ENCODE measurements at regions of chr4 and their contacts with region 1.

Region 1: DNA sequence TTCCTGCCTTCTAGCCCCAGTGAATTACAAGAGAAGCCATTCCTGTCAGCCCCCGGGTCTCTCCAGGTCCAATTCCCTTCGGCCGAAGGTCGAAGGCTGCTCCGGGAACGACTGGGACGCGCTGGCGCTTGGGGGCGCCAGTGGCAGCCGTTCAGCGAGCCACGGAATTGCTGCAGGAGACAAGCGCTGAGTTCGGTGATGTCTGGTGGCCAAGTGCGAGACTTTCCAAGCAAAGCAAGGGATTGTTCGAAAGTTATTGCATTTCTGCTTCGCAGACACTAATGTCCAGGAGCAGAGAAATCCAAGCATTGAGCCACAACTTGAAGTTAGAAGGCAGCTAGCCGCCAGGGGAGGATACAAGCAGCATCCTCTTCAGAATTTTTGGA is 1.1 kb upstream of the DKK2 start:
- DNase-seq: peak in 3 of 5 donors; percentile 27 to 59 (median 29)
- ATAC-seq: peak in 3 of 4 donors; percentile 41 to 59 (median 53)
- H3K4me3 ChIP-seq: peak overlapping the region in 9 of 12 donors; percentile 1 to 55 (median 41)
- H3K27ac ChIP-seq: no peak overlapping the region
- H3K4me1 ChIP-seq: peaks cover 0 to 35% (median 16%) of the 10 kb centered on the region in 12 donors
- H3K27me3 ChIP-seq: peaks cover 16 to 86% (median 46%) of the 10 kb centered on the region in 9 donors
- CTCF ChIP-seq: peak in 6 of 12 donors; percentile 14 to 49 (median 40)
- POLR2A ChIP-seq: no peak

Region 2: GRCh38 chr4:107666134-107666533 is 628.9 kb after region 1 on chr4:
- intact Hi-C with region 1: loop called in 2 of 10 experiments (anchors 10 kb)
- DNase-seq: no peak
- ATAC-seq: no peak
- H3K4me3 ChIP-seq: no peak overlapping the region
- H3K27ac ChIP-seq: no peak overlapping the region
- H3K4me1 ChIP-seq: peaks cover 0 to 14% (median 1%) of the 10 kb centered on the region in 12 donors
- H3K27me3 ChIP-seq: no peaks in the 10 kb centered on the region
- CTCF ChIP-seq: peak in 9 of 12 donors; percentile 13 to 56 (median 39)
- POLR2A ChIP-seq: no peak

Region 3: DNA sequence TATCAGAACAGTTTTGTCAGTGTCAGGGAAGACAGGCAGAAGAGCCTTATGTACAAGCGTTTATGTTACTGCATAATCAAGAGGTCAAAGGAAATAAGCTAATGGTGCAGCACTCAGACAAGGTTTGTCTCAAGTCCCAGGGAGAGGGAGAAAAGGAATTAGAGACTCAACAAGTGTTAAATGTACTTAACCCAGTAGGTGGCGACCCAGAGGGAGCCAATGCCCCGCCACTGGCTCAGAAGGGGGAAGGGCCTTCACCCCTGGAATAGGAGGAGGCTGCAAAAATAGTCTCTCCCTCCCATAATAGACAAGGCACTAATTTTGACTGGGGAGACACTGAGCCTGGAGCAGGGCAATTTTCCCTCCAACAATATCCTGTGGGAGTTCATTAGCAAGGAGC is 696.9 kb after region 1 on chr4:
- intact Hi-C with region 1: loop called in 1 of 10 experiments (anchors 5 kb)
- DNase-seq: no peak
- ATAC-seq: peak in 2 of 4 donors; percentile 28 to 31
- H3K4me3 ChIP-seq: no peak overlapping the region
- H3K27ac ChIP-seq: no peak overlapping the region
- H3K4me1 ChIP-seq: peaks cover 0 to 7% (median 0%) of the 10 kb centered on the region in 12 donors
- H3K27me3 ChIP-seq: no peaks in the 10 kb centered on the region
- CTCF ChIP-seq: peak in 4 of 12 donors; percentile 6 to 23 (median 16)
- POLR2A ChIP-seq: no peak

Measured in heart left ventricle (tissue), 16 donors.